Prostate gland (tissue), 2 donors: ENCODE measurements at regions of chr4 and their contacts with region 1.

Region 1: GRCh38 chr4:133148690-133149363 is at the start of gene PCDH10:
- DNase-seq: peak; percentile 86
- H3K4me3 ChIP-seq: peak within 1 kb of the TSS; percentile 24 to 33
- H3K27ac ChIP-seq: peak within 1 kb of the TSS; percentile 19 to 54
- H3K4me1 ChIP-seq: peaks cover 3% of the 10 kb centered on the region
- H3K27me3 ChIP-seq: peaks cover 11% of the 10 kb centered on the region
- CTCF ChIP-seq: peak in 1 of 4 experiments; percentile 7
- POLR2A ChIP-seq: peak; percentile 47
- total RNA-seq, gene PCDH10: 3.9 to 7.2 TPM

Region 2: GRCh38 chr4:133483600-133484246 is 334.9 kb after region 1 on chr4:
- intact Hi-C with region 1: loop called (anchors 10 kb)
- DNase-seq: no peak
- H3K4me3 ChIP-seq: no peak overlapping the region
- H3K27ac ChIP-seq: no peak overlapping the region
- H3K4me1 ChIP-seq: no peaks in the 10 kb centered on the region
- H3K27me3 ChIP-seq: no peaks in the 10 kb centered on the region
- CTCF ChIP-seq: no peak
- POLR2A ChIP-seq: no peak

Region 3: GRCh38 chr4:134906404-134907023 is 1757.7 kb after region 1 on chr4:
- intact Hi-C with region 1: loop called (anchors 10 kb)
- DNase-seq: no peak
- H3K4me3 ChIP-seq: no peak overlapping the region
- H3K27ac ChIP-seq: no peak overlapping the region
- H3K4me1 ChIP-seq: no peaks in the 10 kb centered on the region
- H3K27me3 ChIP-seq: no peaks in the 10 kb centered on the region
- CTCF ChIP-seq: peak in 1 of 4 experiments; percentile 31
- POLR2A ChIP-seq: no peak